ENCODE measurements at regions of chr13 and their contacts with region 1.

Region 1: DNA sequence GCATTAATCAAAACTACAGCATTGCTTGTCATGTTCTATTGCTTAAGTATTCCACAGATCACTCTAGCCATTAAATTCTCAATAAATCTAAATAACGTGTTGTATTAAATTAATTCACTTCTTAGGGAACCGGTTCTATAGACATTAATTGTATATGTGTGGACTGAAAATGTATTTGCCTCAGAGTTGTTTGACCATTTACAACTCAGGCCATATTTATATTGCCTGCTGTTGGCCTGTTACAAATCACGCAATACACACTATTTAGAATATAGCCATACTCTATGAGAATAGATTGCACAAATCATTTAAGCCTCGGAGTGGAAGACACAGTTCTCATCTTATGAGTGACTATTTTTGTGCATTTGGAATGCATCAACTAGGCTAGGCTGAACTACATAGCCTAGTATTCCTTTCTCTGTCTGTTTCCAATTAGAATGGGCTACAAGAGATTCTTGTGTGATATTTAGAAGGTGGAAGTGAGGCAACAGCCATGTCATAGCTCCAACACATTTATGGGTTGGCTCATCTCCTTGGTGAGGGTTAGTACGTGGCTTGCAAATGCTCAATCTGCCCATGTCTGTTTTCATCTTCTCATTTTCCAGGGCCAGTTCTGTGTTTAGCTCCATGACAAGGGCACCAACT is 1116.1 kb downstream of the PCDH9 start:
- DNase-seq: no peak
- H3K4me3 ChIP-seq: no peak overlapping the region
- H3K27ac ChIP-seq: no peak overlapping the region
- H3K4me1 ChIP-seq: no peaks in the 10 kb centered on the region
- H3K27me3 ChIP-seq: no peaks in the 10 kb centered on the region
- CTCF ChIP-seq: no peak

Region 2: DNA sequence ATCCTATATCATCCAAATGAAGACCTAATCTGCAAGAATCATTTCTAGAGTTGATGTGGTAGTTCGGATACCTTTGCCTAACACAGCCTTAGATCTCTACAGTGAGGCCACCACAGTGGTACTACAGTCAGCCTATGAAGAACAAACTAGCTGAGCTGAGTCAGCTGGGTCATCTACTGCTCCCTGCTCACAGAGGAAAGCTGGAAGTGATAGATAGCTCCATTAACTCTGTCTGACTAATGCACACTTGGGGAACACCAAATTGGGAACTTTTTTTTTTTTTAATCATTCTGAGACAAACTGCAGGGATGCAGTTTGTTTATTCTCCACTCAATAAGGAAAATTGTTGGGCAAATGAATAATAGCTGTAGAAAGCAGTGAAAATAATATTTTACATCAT is 44.4 kb before region 1 on chr13:
- CTCF ChIA-PET with region 1: no interaction called
- dilution Hi-C with region 1: loop called (anchors 5 kb)
- in situ Hi-C with region 1: no loop called
- intact Hi-C with region 1: no loop called
- DNase-seq: no peak
- H3K4me3 ChIP-seq: no peak overlapping the region
- H3K27ac ChIP-seq: no peak overlapping the region
- H3K4me1 ChIP-seq: no peaks in the 10 kb centered on the region
- H3K27me3 ChIP-seq: no peaks in the 10 kb centered on the region
- CTCF ChIP-seq: no peak

Region 3: DNA sequence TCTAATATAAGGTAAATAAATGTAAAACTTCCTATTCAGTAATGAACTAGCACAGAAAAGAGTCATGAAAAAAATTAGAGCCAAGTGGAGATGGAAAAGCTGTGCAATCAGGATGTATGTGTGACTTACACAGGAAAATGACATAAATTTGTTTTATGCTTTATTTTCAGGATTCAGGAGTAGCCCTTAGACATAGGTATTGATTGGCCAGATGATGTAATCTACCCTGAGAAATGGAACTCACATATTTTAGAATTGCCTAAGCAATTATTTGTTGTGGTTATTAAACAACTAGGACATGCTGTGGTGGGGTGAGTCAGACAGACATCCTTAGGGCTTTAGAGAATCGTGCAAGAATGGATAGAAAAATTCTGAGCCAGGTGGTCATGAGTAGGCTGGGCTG is 1005.5 kb after region 1 on chr13:
- CTCF ChIA-PET with region 1: no interaction called
- dilution Hi-C with region 1: no loop called
- in situ Hi-C with region 1: no loop called
- intact Hi-C with region 1: no loop called
- DNase-seq: peak; percentile 85
- H3K4me3 ChIP-seq: no peak overlapping the region
- H3K27ac ChIP-seq: peak overlapping the region; percentile 32
- H3K4me1 ChIP-seq: peaks cover 28% of the 10 kb centered on the region
- H3K27me3 ChIP-seq: no peaks in the 10 kb centered on the region
- CTCF ChIP-seq: no peak

Measured in mammary epithelial cell (primary cell).